Cardiac septum (tissue), 1 donor: ENCODE measurements at regions of chr14 and their contacts with region 1.

Region 1: GRCh38 chr14:91649930-91650329 is 82.0 kb downstream of the CATSPERB start:
- DNase-seq: no peak

Region 2: DNA sequence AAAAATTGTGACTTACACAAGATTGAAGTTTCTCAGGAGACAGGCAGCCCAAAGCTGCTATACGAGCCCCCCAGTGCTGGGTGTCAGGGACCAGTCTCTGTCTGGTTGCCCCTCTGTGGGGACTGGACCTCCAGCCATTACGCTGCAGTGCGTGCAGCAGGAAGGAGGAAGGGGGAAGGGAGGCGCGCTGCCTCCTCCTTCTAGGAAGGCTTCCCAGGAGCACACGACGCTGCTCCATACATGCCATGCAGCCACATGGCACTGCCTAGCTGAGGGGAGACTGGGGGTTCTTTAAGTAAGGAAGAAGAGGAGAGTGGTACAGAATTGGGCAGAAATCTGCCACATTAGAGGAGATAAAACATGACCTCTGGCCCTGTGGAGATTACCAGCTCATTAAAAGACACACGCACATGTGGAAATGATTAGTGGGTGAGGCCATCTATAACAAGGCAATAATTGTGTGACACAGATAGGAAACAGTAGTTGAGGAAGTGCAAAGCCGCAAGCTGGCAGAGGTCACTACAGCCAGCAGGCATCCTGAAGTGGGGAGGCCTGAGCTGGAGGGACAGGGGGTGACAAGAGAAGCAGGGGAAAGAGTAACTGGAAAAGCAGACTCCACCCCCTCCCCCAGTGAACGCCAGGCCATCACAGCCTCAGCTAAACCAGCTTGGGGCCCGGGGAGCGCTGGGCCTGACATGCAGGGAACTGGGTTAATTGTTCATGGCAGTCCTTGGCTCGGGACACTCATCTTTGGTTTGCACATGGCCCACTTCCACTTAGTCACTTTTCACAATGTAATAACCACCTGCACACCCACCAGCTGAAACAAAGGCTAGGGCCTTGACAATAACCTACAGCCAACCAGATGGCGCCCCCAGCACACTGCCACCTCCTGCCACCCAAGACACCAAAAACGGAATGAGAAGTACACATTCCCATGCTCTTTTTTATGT is 272.0 kb before region 1 on chr14:
- intact Hi-C with region 1: no loop called
- DNase-seq: no peak

Region 3: DNA sequence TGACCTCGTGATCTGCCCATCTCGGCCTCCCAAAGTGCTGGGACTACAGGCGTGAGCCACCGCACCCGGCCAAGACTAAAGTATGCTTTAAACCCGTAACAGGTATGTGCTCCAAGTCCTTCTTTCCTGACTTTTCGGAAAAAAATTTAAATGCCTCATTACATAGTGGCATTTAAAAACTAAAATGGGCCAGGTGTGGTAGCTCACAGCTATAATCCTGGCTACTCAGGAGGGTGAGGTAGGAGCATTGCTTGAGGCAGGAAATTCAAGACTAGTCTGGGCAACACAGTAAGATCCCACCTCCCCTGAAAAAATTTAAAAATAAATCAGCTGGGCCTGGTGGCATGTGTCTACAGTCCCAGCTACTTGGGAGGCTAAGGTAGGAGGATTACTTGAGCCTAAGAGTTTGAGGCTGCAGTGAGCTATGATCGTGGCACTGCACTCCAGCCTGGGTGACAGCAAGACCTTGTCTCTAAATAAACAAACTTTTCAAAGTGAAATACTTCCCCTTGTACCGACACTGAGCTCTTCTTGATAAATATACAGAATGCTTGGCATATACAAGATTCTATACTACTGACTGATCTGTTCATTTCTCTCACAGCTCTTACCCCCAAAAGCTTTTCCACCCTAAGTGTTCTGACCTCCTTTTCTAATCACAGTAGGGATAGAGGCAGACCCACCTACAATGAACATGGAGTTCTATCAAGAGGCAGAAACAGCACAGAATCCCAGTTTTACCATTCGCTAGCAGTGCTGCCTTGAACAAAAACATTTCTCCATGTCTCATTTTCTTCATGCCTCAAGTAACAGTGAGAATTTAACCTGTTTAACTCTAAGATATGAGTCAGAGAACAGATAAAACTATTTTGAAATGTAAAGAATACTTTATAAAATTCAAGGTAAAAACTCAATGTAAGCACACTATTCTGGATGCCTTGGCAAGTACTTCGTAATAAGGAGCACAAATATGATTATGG is 147.7 kb before region 1 on chr14:
- intact Hi-C with region 1: no loop called
- DNase-seq: no peak

Region 4: DNA sequence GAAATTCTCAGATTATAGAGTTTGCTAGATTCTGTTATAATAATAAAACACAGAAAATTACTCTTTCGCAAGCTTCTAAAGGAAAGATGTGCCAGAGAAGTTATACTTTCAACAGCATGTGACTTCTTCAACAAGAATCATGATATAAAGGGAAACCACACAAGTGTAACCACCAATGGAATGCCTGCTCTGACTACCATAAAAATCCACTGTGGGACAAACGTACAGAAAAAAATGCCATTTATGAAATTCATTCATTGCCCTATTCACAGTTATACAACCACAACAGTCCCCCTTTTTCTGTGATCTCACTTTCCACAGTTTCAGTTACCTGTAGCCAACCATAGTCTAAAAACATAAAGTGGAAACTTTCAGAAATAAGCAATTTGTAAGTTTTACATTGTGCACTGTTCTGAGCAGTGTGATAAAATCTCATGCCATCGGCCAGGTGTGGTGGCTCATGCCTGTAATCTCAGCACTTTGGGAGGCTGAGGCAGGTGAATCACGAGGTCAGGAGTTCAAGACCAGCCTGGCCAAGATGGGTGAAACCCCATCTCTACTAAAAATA is 78.8 kb after region 1 on chr14:
- intact Hi-C with region 1: no loop called
- DNase-seq: no peak

Region 5: GRCh38 chr14:91911474-91912032 is 261.6 kb after region 1 on chr14:
- intact Hi-C with region 1: loop called (anchors 2 kb)
- DNase-seq: peak; percentile 22

Region 6: GRCh38 chr14:91996948-91997371 is 347.0 kb after region 1 on chr14:
- intact Hi-C with region 1: loop called (anchors 10 kb)
- DNase-seq: no peak